ENCODE measurements at regions of chr11 and their contacts with region 1.

Region 1: DNA sequence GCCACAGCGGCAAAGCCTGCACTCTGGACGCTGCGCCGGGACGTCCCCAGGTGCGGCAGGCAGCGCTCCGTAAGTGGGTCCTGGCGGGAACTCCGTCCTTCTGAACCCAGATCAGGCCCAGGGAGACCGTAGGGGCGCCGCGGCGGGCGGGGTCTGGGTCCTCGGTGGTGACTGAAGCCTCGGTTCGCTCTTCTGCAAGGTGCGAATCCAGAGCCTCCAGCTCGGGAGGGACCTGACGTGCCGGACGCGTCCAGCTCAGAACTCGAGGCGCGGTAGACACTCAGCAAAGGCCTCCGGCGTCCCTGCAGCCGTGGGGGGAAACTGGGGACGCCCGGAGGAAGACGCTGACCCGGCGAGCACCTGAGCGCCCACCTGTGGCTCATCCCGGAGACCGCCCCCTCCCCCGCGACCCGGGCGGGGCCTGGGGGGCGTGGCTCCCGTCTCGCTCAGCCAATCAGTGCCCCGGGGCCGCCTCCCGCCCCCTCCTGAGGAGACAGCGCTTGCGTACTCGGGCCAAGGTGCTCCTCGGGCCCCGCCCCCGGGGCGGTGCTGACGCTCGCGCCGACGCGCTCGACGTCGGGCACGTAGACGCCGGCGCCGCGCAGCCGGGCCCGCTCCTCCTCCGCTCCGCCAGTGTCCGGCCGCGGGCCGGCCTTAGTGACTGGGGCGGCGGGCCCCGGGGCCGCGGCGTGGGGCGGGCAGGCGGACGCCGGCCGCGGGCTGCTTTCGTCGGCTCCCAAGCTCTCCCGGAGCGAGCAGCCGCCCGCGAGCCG is at the start of gene PPFIA1:
- DNase-seq: peak; percentile 97
- H3K4me3 ChIP-seq: peak within 1 kb of the TSS; percentile 78 to 97 (median 84)
- H3K27ac ChIP-seq: peak within 1 kb of the TSS; percentile 87 to 97 (median 94)
- H3K4me1 ChIP-seq: peaks cover 10 to 29% (median 22%) of the 10 kb centered on the region in 4 donors
- H3K27me3 ChIP-seq: no peaks in the 10 kb centered on the region
- CTCF ChIP-seq: peak in 1 of 5 experiments; percentile 8
- EP300 ChIP-seq: no peak
- POLR2A ChIP-seq: peak; percentile 74
- total RNA-seq, gene PPFIA1: 42.6 to 143 (median 72.8) TPM

Region 2: DNA sequence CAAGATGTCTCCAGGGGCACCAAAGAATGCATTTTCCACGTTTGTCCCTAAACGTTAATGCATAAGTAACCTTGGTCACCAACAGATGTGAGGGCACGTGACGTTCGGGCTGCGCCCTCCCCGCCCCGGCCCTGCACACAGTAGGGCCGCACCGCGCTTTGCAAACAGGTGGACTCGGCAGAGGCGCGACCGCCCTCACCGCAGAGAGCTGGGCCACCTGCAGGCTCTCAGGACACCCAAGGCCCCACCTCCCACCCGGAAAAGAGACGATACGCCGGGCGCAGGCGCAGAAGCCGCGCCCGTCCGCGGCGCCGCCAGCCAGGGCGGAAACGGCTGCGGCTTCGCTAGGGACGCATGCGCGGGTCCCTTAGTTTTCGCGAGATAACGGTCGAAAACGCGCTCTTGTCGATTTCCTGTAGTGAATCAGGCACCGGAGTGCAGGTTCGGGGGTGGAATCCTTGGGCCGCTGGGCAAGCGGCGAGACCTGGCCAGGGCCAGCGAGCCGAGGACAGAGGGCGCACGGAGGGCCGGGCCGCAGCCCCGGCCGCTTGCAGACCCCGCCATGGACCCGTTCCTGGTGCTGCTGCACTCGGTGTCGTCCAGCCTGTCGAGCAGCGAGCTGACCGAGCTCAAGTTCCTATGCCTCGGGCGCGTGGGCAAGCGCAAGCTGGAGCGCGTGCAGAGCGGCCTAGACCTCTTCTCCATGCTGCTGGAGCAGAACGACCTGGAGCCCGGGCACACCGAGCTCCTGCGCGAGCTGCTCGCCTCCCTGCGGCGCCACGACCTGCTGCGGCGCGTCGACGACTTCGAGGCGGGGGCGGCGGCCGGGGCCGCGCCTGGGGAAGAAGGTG is 67.2 kb before region 1 on chr11 and contains the start of gene FADD:
- in situ Hi-C with region 1: no loop called
- intact Hi-C with region 1: loop called (anchors 1 kb)
- DNase-seq: peak; percentile 94
- H3K4me3 ChIP-seq: peak within 1 kb of the TSS; percentile 69 to 96 (median 88)
- H3K27ac ChIP-seq: peak within 1 kb of the TSS; percentile 94 to 99 (median 96)
- H3K4me1 ChIP-seq: peaks cover 10 to 21% (median 18%) of the 10 kb centered on the region in 4 donors
- H3K27me3 ChIP-seq: no peaks in the 10 kb centered on the region
- CTCF ChIP-seq: peak in 1 of 5 experiments; percentile 8
- EP300 ChIP-seq: no peak
- POLR2A ChIP-seq: peak; percentile 90
- total RNA-seq, gene FADD: 24.5 to 42.3 (median 31.5) TPM

Measured in transverse colon (tissue), 4 donors.